Activated CD4-positive, alpha-beta memory T cell treated with anti-CD3 and anti-CD28 coated beads, Interleukin-2, amount 10 ng/mL, durations not matched to agents 7 days and 5 days (primary cell): ENCODE measurements at regions of chr17 and their contacts with region 1.

Region 1: DNA sequence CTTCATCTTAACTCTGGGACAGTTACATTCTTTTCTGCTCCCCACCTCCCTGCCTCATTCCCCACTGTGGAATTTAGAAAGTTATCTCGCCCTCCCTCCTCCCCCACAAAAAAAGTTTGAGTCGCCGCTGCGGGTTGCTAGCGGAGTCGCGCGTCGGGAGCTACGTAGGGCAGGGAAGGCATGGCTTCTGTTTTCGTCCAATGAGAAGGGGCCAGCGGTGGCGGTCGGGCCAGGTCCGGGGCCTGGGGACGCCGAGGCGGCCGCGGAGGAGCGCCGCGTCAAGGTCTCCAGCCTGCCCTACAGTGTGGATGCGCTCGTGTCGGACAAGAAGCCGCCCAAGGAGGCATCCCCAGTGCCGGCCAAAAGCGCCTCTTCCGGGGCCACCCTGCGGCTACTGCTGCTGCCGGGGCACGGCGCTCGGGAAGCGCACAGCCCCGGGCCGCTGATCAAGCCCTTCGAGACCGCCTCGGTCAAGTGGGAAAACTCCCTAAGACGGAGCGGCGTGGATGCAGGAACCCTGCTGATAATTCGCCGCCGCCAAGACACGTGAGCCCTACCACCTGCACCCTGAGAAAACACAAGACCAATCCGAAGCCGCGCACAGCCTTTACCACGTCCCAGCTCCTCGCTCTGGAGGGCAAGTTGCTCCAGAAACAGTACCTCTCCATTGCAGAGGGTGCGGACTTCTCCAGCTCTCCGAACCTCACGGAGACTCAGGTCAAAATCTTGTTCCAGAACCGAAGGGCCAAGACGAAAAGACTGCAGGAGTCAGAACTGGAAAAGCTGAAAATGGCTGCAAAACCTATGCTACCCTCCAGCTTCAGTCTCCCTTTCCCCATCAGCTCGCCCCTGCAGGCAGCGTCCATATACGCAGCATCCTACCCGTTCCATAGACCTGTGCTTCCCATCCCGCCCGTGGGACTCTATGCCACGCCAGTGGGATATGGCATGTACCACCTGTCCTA is 8.9 kb downstream of the OR4D1 start:
- DNase-seq: peak; percentile 67
- H3K4me3 Mint-ChIP-seq: peak overlapping the region; percentile 77
- H3K27ac Mint-ChIP-seq: peak overlapping the region; percentile 65
- H3K4me1 Mint-ChIP-seq: peaks cover 63% of the 10 kb centered on the region
- H3K27me3 Mint-ChIP-seq: peaks cover 6% of the 10 kb centered on the region

Region 2: GRCh38 chr17:58096892-58097291 is 60.2 kb before region 1 on chr17:
- CTCF ChIA-PET with region 1: no interaction called
- POLR2A ChIA-PET with region 1: no interaction called
- DNase-seq: no peak
- H3K4me3 Mint-ChIP-seq: no peak overlapping the region
- H3K27ac Mint-ChIP-seq: no peak overlapping the region
- H3K4me1 Mint-ChIP-seq: peaks cover 8% of the 10 kb centered on the region
- H3K27me3 Mint-ChIP-seq: no peaks in the 10 kb centered on the region

Region 3: GRCh38 chr17:58121925-58122324 is 35.2 kb before region 1 on chr17:
- CTCF ChIA-PET with region 1: interaction called, 17 read pairs
- POLR2A ChIA-PET with region 1: no interaction called
- DNase-seq: peak; percentile 46
- H3K4me3 Mint-ChIP-seq: no peak overlapping the region
- H3K27ac Mint-ChIP-seq: no peak overlapping the region
- H3K4me1 Mint-ChIP-seq: peaks cover 3% of the 10 kb centered on the region
- H3K27me3 Mint-ChIP-seq: peaks cover 27% of the 10 kb centered on the region